Activated CD4-positive, alpha-beta memory T cell treated with anti-CD3 and anti-CD28 coated beads for 36 hours (primary cell): ENCODE measurements at regions of chr13 and their contacts with region 1.

Region 1: DNA sequence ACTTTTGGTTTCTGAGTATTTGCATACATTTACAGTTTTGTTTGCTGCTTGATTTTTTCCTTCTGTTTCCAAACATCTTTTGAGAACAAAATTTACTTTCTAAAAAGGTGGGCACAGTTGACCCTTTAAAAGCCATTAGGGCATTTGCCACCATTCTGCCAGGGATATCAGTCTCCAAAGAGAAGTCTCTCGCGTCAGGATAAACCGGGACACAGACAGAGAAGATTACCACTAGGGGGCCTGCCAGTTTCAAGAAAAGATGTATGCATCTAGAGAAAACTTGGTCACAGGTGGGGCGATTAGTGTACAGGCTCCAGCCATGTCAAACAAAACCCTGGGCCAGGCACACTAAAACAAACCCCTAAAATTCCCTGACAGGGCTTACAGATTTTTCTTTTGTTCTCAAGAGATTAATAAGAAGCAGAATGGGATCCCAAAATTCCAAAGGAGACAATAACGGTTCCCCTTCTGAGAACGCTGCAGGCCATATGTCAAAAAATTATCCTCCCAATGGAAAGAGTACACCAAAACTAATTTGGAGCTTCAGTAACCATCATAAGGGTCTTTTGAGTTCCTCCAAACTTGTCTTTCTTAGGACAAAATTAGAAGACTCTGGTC is 10.7 kb upstream of the PABPC3 start:
- DNase-seq: peak; percentile 15
- H3K4me3 Mint-ChIP-seq: no peak overlapping the region
- H3K27ac Mint-ChIP-seq: no peak overlapping the region
- H3K4me1 Mint-ChIP-seq: no peaks in the 10 kb centered on the region
- H3K27me3 Mint-ChIP-seq: peaks cover 5% of the 10 kb centered on the region

Region 2: DNA sequence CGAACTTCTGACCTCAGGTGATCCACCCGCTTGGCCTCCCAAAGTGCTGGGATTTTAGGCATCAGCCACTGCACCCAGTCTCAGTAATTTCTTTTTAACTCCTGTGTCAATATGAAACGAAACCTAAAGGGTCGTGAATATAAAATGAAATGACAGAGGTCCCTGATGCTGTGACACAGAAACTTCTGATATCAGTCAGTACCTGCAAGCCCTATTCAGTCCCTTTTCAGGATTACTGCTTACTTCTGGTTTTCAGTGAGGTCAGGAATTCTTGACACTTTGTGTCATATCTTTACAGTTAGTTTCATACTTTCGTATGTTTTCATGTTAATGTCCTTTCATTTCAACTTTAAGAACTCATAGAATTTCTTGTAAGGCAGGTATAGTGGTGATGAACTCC is 262.6 kb before region 1 on chr13:
- CTCF ChIA-PET with region 1: no interaction called
- POLR2A ChIA-PET with region 1: no interaction called
- intact Hi-C with region 1: no loop called
- DNase-seq: peak; percentile 9
- H3K4me3 Mint-ChIP-seq: no peak overlapping the region
- H3K27ac Mint-ChIP-seq: no peak overlapping the region
- H3K4me1 Mint-ChIP-seq: no peaks in the 10 kb centered on the region
- H3K27me3 Mint-ChIP-seq: peaks cover 27% of the 10 kb centered on the region

Region 3: GRCh38 chr13:25114220-25114619 is 29.0 kb after region 1 on chr13:
- CTCF ChIA-PET with region 1: interaction called, 4 read pairs
- POLR2A ChIA-PET with region 1: no interaction called
- intact Hi-C with region 1: loop called (anchors 2 kb)
- DNase-seq: peak; percentile 79
- H3K4me3 Mint-ChIP-seq: no peak overlapping the region
- H3K27ac Mint-ChIP-seq: no peak overlapping the region
- H3K4me1 Mint-ChIP-seq: no peaks in the 10 kb centered on the region
- H3K27me3 Mint-ChIP-seq: peaks cover 19% of the 10 kb centered on the region

Region 4: GRCh38 chr13:25827831-25828465 is 742.7 kb after region 1 on chr13:
- CTCF ChIA-PET with region 1: no interaction called
- POLR2A ChIA-PET with region 1: no interaction called
- intact Hi-C with region 1: no loop called
- DNase-seq: no peak
- H3K4me3 Mint-ChIP-seq: no peak overlapping the region
- H3K27ac Mint-ChIP-seq: no peak overlapping the region
- H3K4me1 Mint-ChIP-seq: no peaks in the 10 kb centered on the region
- H3K27me3 Mint-ChIP-seq: peaks cover 3% of the 10 kb centered on the region